B cell (primary cell): ENCODE measurements at regions of chr2 and their contacts with region 1.

Region 1: DNA sequence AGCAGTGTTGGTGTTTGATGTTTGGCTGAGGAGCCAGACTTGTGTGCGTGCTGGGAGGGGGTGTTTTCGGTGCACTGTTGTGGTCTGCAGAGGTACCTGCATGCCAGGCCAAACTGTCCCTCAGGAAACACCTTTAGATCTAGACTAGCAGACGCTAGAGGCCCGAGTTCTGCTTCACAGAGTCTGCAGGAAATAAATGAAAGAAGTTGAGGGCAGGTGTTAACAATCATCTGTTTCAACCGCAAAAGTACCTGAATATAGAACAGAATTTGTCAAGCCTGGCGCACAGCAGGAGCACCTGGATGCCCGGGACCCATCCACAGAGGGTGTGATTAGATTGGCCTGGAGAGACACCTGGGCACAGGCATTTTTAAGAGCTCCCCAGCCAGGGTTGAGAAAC is 40.5 kb upstream of the REL start:
- DNase-seq: peak; percentile 86
- ATAC-seq: peak; percentile 83
- H3K4me3 ChIP-seq: peak overlapping the region in 2 of 5 experiments; percentile 23 to 25
- H3K4me3 Mint-ChIP-seq: peak overlapping the region; percentile 74
- H3K27ac ChIP-seq: peak overlapping the region; percentile 87 to 92
- H3K27ac Mint-ChIP-seq: peak overlapping the region; percentile 93
- H3K4me1 ChIP-seq: peaks cover 83 to 87% of the 10 kb centered on the region in 2 donors
- H3K4me1 Mint-ChIP-seq: peaks cover 78% of the 10 kb centered on the region
- H3K27me3 ChIP-seq: no peaks in the 10 kb centered on the region
- H3K27me3 Mint-ChIP-seq: no peaks in the 10 kb centered on the region
- CTCF ChIP-seq: no peak

Region 2: DNA sequence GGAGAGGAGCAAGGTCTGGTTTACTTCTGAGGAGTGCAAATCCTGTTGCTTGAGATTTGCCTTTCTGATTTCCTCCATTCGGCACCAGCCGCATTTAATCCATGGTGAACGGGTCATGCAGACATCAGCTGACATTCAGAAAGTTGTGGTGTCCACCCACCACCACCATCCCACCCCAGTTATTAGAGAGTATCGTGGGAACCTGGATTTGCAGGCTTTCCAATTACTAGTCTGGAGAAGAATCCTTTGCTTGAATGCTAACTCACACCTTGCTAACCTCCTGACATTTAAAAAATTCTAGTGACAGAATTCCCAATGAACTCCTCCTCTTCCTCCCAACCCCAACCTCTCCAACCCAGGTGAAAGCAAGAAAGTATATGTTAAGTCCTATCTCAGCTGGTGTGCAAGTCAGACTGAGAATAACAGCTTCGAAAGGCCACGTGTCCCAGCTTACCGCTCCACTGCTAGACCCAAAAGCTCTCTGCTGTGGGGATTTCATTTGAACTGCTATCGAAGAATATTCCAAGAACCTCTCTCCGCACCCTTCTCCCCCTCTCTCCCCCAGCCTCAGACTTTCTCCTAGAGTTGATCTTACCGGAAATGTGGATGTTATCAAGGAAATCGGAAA is 305.1 kb before region 1 on chr2:
- CTCF ChIA-PET with region 1: no interaction called
- POLR2A ChIA-PET with region 1: no interaction called
- intact Hi-C with region 1: no loop called
- DNase-seq: no peak
- ATAC-seq: peak; percentile 55
- H3K4me3 ChIP-seq: peak overlapping the region in 2 of 5 experiments; percentile 13
- H3K4me3 Mint-ChIP-seq: peak overlapping the region; percentile 70
- H3K27ac ChIP-seq: peak overlapping the region; percentile 23 to 80
- H3K27ac Mint-ChIP-seq: peak overlapping the region; percentile 69
- H3K4me1 ChIP-seq: peaks cover 89 to 99% of the 10 kb centered on the region in 2 donors
- H3K4me1 Mint-ChIP-seq: peaks cover 91% of the 10 kb centered on the region
- H3K27me3 ChIP-seq: no peaks in the 10 kb centered on the region
- H3K27me3 Mint-ChIP-seq: no peaks in the 10 kb centered on the region
- CTCF ChIP-seq: no peak

Region 3: DNA sequence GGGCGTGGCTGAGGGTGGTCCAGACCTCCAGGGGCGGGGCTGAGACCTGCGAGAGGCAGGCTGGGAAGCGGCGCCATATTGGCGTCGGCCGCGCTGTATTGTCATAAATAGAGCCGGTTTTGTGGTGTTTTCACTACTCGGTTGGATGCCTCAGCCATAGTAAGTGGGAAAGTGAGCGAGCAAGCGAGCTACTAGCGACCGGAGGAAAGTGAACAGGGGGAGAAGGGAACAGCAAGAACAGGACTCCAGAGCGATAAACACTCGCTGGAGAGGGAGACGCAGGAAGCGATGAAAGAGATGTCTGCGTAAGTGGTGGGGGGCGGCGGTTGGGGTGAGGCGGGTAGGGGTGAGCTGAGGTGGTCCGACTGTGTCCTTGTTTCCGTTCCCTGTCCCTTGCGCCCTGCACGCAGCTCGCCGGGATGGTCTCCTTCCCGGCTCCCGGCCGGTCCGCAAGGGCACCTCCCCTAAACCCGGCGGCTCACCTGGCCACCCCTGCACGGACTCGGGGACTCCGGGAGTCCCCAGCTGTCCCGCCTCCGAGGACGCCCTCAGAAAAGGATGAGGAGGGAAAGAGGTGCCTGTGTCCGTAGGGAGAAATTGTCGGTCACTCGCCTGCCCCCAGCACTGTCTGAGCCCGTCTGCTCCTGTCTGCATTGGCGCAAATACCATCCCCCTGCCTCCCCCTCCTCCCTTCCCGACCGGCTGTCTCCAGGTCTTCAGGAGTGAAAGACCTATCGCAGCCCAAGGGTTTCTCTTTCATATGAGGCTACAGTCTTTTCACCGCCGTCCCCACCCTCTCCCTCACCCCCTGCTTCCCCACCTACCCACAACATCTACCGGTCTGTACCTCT is 84.5 kb before region 1 on chr2 and contains the start of gene PAPOLG:
- CTCF ChIA-PET with region 1: no interaction called
- POLR2A ChIA-PET with region 1: no interaction called
- intact Hi-C with region 1: no loop called
- DNase-seq: peak; percentile 96
- ATAC-seq: peak; percentile 100
- H3K4me3 ChIP-seq: peak within 1 kb of the TSS; percentile 77 to 100 (median 87)
- H3K4me3 Mint-ChIP-seq: peak within 1 kb of the TSS; percentile 97
- H3K27ac ChIP-seq: peak within 1 kb of the TSS; percentile 85 to 87
- H3K27ac Mint-ChIP-seq: peak within 1 kb of the TSS; percentile 96
- H3K4me1 ChIP-seq: peaks cover 13 to 15% of the 10 kb centered on the region in 2 donors
- H3K4me1 Mint-ChIP-seq: peaks cover 29% of the 10 kb centered on the region
- H3K27me3 ChIP-seq: no peaks in the 10 kb centered on the region
- H3K27me3 Mint-ChIP-seq: no peaks in the 10 kb centered on the region
- CTCF ChIP-seq: no peak
- total RNA-seq, gene PAPOLG: 27.5 and 37.2 TPM in 2 replicates

Region 4: GRCh38 chr2:60806988-60807681 is 33.7 kb before region 1 on chr2:
- CTCF ChIA-PET with region 1: interaction called, 11 read pairs
- POLR2A ChIA-PET with region 1: no interaction called
- intact Hi-C with region 1: loop called (anchors 5 kb)
- DNase-seq: peak; percentile 32
- ATAC-seq: peak; percentile 56
- H3K4me3 ChIP-seq: no peak overlapping the region
- H3K4me3 Mint-ChIP-seq: no peak overlapping the region
- H3K27ac ChIP-seq: peak overlapping the region; percentile 31 to 55
- H3K27ac Mint-ChIP-seq: peak overlapping the region; percentile 83
- H3K4me1 ChIP-seq: peaks cover 20 to 32% of the 10 kb centered on the region in 2 donors
- H3K4me1 Mint-ChIP-seq: peaks cover 34% of the 10 kb centered on the region
- H3K27me3 ChIP-seq: no peaks in the 10 kb centered on the region
- H3K27me3 Mint-ChIP-seq: no peaks in the 10 kb centered on the region
- CTCF ChIP-seq: no peak

Region 5: GRCh38 chr2:60818272-60818671 is 22.6 kb before region 1 on chr2:
- CTCF ChIA-PET with region 1: interaction called, 11 read pairs
- POLR2A ChIA-PET with region 1: interaction called, 3 read pairs
- intact Hi-C with region 1: no loop called
- DNase-seq: peak; percentile 56
- ATAC-seq: peak; percentile 57
- H3K4me3 ChIP-seq: no peak overlapping the region
- H3K4me3 Mint-ChIP-seq: peak overlapping the region; percentile 34
- H3K27ac ChIP-seq: no peak overlapping the region
- H3K27ac Mint-ChIP-seq: peak overlapping the region; percentile 46
- H3K4me1 ChIP-seq: peaks cover 32 to 37% of the 10 kb centered on the region in 2 donors
- H3K4me1 Mint-ChIP-seq: peaks cover 44% of the 10 kb centered on the region
- H3K27me3 ChIP-seq: no peaks in the 10 kb centered on the region
- H3K27me3 Mint-ChIP-seq: no peaks in the 10 kb centered on the region
- CTCF ChIP-seq: peak; percentile 51

Region 6: DNA sequence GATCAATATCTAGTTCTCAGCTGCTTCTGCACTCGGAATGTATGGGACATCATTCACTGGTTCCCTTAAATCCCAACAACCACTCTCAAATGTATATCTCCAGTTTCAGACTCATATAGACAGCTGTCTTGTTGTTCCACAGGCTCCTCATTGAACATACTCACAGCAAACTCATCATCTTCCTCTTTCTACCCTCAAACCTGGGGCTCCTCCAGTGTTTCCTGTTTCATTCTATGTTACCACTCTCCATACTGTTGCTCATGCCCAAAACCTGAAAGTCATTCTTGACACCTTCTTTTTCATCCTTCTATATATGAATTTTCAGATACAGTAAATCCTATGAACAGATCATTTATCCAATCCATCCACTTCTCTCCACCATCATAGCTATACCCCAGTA is 21.8 kb after region 1 on chr2:
- CTCF ChIA-PET with region 1: interaction called, 10 read pairs
- POLR2A ChIA-PET with region 1: interaction called, 9 read pairs
- intact Hi-C with region 1: no loop called
- DNase-seq: no peak
- ATAC-seq: peak; percentile 45
- H3K4me3 ChIP-seq: no peak overlapping the region
- H3K4me3 Mint-ChIP-seq: peak overlapping the region; percentile 5
- H3K27ac ChIP-seq: no peak overlapping the region
- H3K27ac Mint-ChIP-seq: no peak overlapping the region
- H3K4me1 ChIP-seq: peaks cover 35 to 42% of the 10 kb centered on the region in 2 donors
- H3K4me1 Mint-ChIP-seq: peaks cover 36% of the 10 kb centered on the region
- H3K27me3 ChIP-seq: no peaks in the 10 kb centered on the region
- H3K27me3 Mint-ChIP-seq: no peaks in the 10 kb centered on the region
- CTCF ChIP-seq: no peak

Region 7: DNA sequence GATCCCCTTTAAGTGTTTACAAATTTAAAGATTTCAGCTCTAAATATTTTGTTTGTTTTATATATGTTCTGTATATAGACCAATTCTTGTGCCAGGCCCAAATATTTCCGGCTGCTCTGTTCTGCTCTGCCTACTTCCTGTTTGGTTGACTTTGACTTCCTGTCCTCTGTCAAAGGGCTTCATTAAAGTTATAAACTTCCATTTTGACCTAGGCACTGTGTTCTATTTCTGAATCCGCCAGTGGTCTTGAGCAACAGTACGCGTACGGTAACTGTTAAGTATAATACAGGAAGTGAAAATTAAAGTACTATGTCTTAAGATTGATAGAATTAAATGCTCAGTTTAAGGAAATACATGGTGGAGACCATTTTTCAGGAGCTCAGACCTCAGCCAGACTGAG is 27.0 kb after region 1 on chr2:
- CTCF ChIA-PET with region 1: interaction called, 10 read pairs
- POLR2A ChIA-PET with region 1: interaction called, 9 read pairs
- intact Hi-C with region 1: loop called (anchors 1 kb)
- DNase-seq: peak; percentile 86
- ATAC-seq: peak; percentile 88
- H3K4me3 ChIP-seq: peak overlapping the region in 1 of 5 experiments; percentile 33
- H3K4me3 Mint-ChIP-seq: peak overlapping the region; percentile 38
- H3K27ac ChIP-seq: peak overlapping the region; percentile 48 to 64
- H3K27ac Mint-ChIP-seq: peak overlapping the region; percentile 88
- H3K4me1 ChIP-seq: peaks cover 49 to 57% of the 10 kb centered on the region in 2 donors
- H3K4me1 Mint-ChIP-seq: peaks cover 51% of the 10 kb centered on the region
- H3K27me3 ChIP-seq: no peaks in the 10 kb centered on the region
- H3K27me3 Mint-ChIP-seq: no peaks in the 10 kb centered on the region
- CTCF ChIP-seq: no peak

Region 8: GRCh38 chr2:60873381-60873780 is 32.5 kb after region 1 on chr2:
- CTCF ChIA-PET with region 1: interaction called, 4 read pairs
- POLR2A ChIA-PET with region 1: interaction called, 9 read pairs
- intact Hi-C with region 1: loop called (anchors 1 kb)
- DNase-seq: peak; percentile 76
- ATAC-seq: peak; percentile 80
- H3K4me3 ChIP-seq: peak overlapping the region in 1 of 5 experiments; percentile 8
- H3K4me3 Mint-ChIP-seq: peak overlapping the region; percentile 53
- H3K27ac ChIP-seq: peak overlapping the region; percentile 65 to 73
- H3K27ac Mint-ChIP-seq: peak overlapping the region; percentile 89
- H3K4me1 ChIP-seq: peaks cover 33 to 37% of the 10 kb centered on the region in 2 donors
- H3K4me1 Mint-ChIP-seq: peaks cover 43% of the 10 kb centered on the region
- H3K27me3 ChIP-seq: no peaks in the 10 kb centered on the region
- H3K27me3 Mint-ChIP-seq: no peaks in the 10 kb centered on the region
- CTCF ChIP-seq: no peak

Region 9: GRCh38 chr2:61011678-61012077 is 170.8 kb after region 1 on chr2:
- CTCF ChIA-PET with region 1: no interaction called
- POLR2A ChIA-PET with region 1: no interaction called
- intact Hi-C with region 1: no loop called
- DNase-seq: no peak
- ATAC-seq: no peak
- H3K4me3 ChIP-seq: no peak overlapping the region
- H3K4me3 Mint-ChIP-seq: no peak overlapping the region
- H3K27ac ChIP-seq: no peak overlapping the region
- H3K27ac Mint-ChIP-seq: no peak overlapping the region
- H3K4me1 ChIP-seq: peaks cover 4 to 6% of the 10 kb centered on the region in 2 donors
- H3K4me1 Mint-ChIP-seq: peaks cover 12% of the 10 kb centered on the region
- H3K27me3 ChIP-seq: no peaks in the 10 kb centered on the region
- H3K27me3 Mint-ChIP-seq: no peaks in the 10 kb centered on the region
- CTCF ChIP-seq: no peak